CD8-positive, alpha-beta T cell (primary cell): ENCODE measurements at regions of chr13 and their contacts with region 1.

Region 1: GRCh38 chr13:99501184-99501847 is at the start of gene TM9SF2:
- DNase-seq: peak; percentile 92 to 99 (median 97)
- ATAC-seq: peak; percentile 59
- H3K4me3 ChIP-seq: peak within 1 kb of the TSS; percentile 83 to 91
- H3K4me3 Mint-ChIP-seq: peak within 1 kb of the TSS; percentile 99
- H3K27ac ChIP-seq: peak within 1 kb of the TSS; percentile 86 to 88
- H3K27ac Mint-ChIP-seq: peak within 1 kb of the TSS; percentile 98
- H3K4me1 ChIP-seq: peaks cover 66% of the 10 kb centered on the region
- H3K4me1 Mint-ChIP-seq: peaks cover 81% of the 10 kb centered on the region
- H3K27me3 ChIP-seq: no peaks in the 10 kb centered on the region
- H3K27me3 Mint-ChIP-seq: no peaks in the 10 kb centered on the region
- CTCF ChIP-seq: no peak
- total RNA-seq, gene TM9SF2: 42.7 to 47.5 TPM

Region 2: GRCh38 chr13:97975848-97976609 is 1525.3 kb before region 1 on chr13:
- CTCF ChIA-PET with region 1: no interaction called
- POLR2A ChIA-PET with region 1: no interaction called
- intact Hi-C with region 1: loop called (anchors 5 to 10 kb)
- DNase-seq: peak; percentile 77 to 95 (median 88)
- ATAC-seq: peak; percentile 92
- H3K4me3 ChIP-seq: peak overlapping the region; percentile 89 to 92
- H3K4me3 Mint-ChIP-seq: peak overlapping the region; percentile 94
- H3K27ac ChIP-seq: peak overlapping the region; percentile 73 to 82
- H3K27ac Mint-ChIP-seq: peak overlapping the region; percentile 93
- H3K4me1 ChIP-seq: peaks cover 21% of the 10 kb centered on the region
- H3K4me1 Mint-ChIP-seq: peaks cover 42% of the 10 kb centered on the region
- H3K27me3 ChIP-seq: no peaks in the 10 kb centered on the region
- H3K27me3 Mint-ChIP-seq: no peaks in the 10 kb centered on the region
- CTCF ChIP-seq: no peak

Region 3: DNA sequence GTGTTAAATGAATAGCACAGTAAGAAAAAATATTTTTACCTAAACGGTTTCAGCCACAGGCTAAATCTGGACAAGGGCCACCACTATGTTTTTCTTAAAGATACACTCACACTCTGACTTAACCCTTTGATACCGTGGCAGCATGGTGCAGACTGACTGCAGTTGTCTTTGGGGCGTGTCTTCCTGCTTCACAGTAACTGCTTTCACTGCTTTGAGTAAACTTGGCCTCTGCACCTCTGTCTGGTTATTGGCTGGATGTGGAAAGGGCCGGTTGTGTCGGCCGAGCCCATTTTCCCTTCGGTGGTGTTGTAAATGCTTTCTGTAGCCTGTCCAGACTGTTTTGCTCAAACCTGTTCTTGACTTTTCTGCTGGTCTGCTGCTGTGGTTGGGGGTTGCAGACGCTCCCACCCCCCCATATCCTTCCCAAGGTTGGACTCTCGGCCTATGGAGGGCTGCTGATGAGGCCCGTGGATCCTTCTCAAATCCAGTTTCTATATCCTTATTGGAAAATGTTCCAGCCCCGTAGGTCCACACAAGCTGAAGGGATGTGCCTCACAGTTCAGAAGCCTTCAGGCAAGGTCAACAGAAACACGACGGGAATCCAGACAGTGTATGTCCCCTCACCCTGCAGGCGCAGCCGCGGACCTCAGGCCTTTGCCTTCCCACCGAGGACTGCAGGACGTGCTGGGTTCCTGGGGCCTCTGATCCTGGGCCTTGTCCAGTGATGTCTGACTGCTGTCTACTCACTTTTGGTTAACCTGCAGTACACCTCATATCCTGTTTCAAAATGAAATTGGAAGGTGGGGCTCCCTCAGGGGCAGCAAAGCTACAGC is 1234.0 kb before region 1 on chr13:
- CTCF ChIA-PET with region 1: no interaction called
- POLR2A ChIA-PET with region 1: no interaction called
- intact Hi-C with region 1: no loop called
- DNase-seq: no peak
- ATAC-seq: no peak
- H3K4me3 ChIP-seq: no peak overlapping the region
- H3K4me3 Mint-ChIP-seq: no peak overlapping the region
- H3K27ac ChIP-seq: no peak overlapping the region
- H3K27ac Mint-ChIP-seq: no peak overlapping the region
- H3K4me1 ChIP-seq: no peaks in the 10 kb centered on the region
- H3K4me1 Mint-ChIP-seq: no peaks in the 10 kb centered on the region
- H3K27me3 ChIP-seq: no peaks in the 10 kb centered on the region
- H3K27me3 Mint-ChIP-seq: no peaks in the 10 kb centered on the region
- CTCF ChIP-seq: no peak

Region 4: DNA sequence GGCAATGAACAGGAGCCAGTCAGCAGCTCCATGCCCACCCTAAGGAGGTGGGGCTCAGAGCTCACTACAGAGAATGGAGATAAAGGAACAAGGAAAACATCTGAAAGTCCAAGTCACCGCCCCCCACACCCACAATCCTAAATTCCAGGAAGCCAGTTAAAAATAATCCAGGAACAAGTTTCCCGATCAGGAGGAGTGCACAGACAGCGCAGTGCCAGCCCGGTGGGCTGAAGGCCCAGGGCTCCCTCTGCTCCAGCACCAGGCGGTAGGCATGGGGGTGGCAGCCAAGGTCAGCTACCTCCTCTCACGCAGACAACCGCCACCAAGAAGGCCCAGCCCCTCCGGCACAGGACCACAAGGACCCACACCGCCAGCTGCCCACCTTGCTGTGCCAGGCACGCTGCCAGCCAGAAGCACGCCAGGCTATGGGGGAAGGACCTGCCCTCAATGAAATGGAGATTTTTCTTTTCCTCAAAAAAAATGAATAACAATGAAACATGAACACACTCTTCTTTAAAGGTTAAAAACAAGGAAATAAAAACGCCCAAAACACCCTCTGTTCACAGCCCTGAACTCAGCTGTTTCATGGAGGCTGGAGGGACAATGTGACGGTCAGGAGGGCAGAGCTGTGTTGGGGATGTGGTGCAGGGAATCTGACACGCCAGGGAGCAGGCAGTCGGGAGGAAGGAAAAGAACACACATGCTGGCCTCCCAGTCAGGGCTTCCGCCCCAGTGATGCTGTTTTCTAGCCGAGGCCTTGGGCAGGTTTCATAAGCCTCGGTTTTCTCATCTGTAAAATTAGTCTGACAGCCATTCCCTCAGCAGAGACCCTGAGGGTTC is 935.4 kb before region 1 on chr13:
- CTCF ChIA-PET with region 1: no interaction called
- POLR2A ChIA-PET with region 1: no interaction called
- intact Hi-C with region 1: loop called in 1 of 2 experiments (anchors 10 kb)
- DNase-seq: no peak
- ATAC-seq: no peak
- H3K4me3 ChIP-seq: no peak overlapping the region
- H3K4me3 Mint-ChIP-seq: peak overlapping the region; percentile 73
- H3K27ac ChIP-seq: peak overlapping the region in 1 of 2 experiments; percentile 39
- H3K27ac Mint-ChIP-seq: peak overlapping the region; percentile 97
- H3K4me1 ChIP-seq: peaks cover 79% of the 10 kb centered on the region
- H3K4me1 Mint-ChIP-seq: peaks cover 87% of the 10 kb centered on the region
- H3K27me3 ChIP-seq: no peaks in the 10 kb centered on the region
- H3K27me3 Mint-ChIP-seq: no peaks in the 10 kb centered on the region
- CTCF ChIP-seq: no peak

Region 5: GRCh38 chr13:99200432-99201167 is 300.7 kb before region 1 on chr13 and contains the start of gene UBAC2:
- CTCF ChIA-PET with region 1: no interaction called
- POLR2A ChIA-PET with region 1: no interaction called
- intact Hi-C with region 1: loop called (anchors 1 to 5 kb)
- DNase-seq: peak; percentile 93 to 99 (median 97)
- ATAC-seq: peak; percentile 77
- H3K4me3 ChIP-seq: peak within 1 kb of the TSS; percentile 77 to 90
- H3K4me3 Mint-ChIP-seq: peak within 1 kb of the TSS; percentile 90
- H3K27ac ChIP-seq: peak within 1 kb of the TSS; percentile 98 to 99
- H3K27ac Mint-ChIP-seq: peak within 1 kb of the TSS; percentile 94
- H3K4me1 ChIP-seq: peaks cover 53% of the 10 kb centered on the region
- H3K4me1 Mint-ChIP-seq: peaks cover 69% of the 10 kb centered on the region
- H3K27me3 ChIP-seq: no peaks in the 10 kb centered on the region
- H3K27me3 Mint-ChIP-seq: no peaks in the 10 kb centered on the region
- CTCF ChIP-seq: no peak
- total RNA-seq, gene UBAC2: 62.0 to 63.0 TPM

Region 6: GRCh38 chr13:99258210-99258860 is 243.0 kb before region 1 on chr13 and contains the start of gene GPR18:
- CTCF ChIA-PET with region 1: interaction called, 3 read pairs
- POLR2A ChIA-PET with region 1: no interaction called
- intact Hi-C with region 1: loop called in 1 of 2 experiments (anchors 2 kb)
- DNase-seq: peak in 4 of 9 experiments; percentile 41 to 80 (median 53)
- ATAC-seq: peak; percentile 77
- H3K4me3 ChIP-seq: peak within 1 kb of the TSS; percentile 55 to 63
- H3K4me3 Mint-ChIP-seq: peak within 1 kb of the TSS; percentile 91
- H3K27ac ChIP-seq: peak within 1 kb of the TSS; percentile 67 to 82
- H3K27ac Mint-ChIP-seq: peak within 1 kb of the TSS; percentile 94
- H3K4me1 ChIP-seq: peaks cover 63% of the 10 kb centered on the region
- H3K4me1 Mint-ChIP-seq: peaks cover 74% of the 10 kb centered on the region
- H3K27me3 ChIP-seq: no peaks in the 10 kb centered on the region
- H3K27me3 Mint-ChIP-seq: no peaks in the 10 kb centered on the region
- CTCF ChIP-seq: no peak
- total RNA-seq, gene GPR18: 31.9 to 36.2 TPM

Region 7: GRCh38 chr13:99464441-99464949 is 36.8 kb before region 1 on chr13:
- CTCF ChIA-PET with region 1: no interaction called
- POLR2A ChIA-PET with region 1: interaction called, 3 read pairs
- intact Hi-C with region 1: loop called in 1 of 2 experiments (anchors 5 kb)
- DNase-seq: peak in 3 of 9 experiments; percentile 10 to 49 (median 32)
- ATAC-seq: peak; percentile 51
- H3K4me3 ChIP-seq: peak overlapping the region in 1 of 2 experiments; percentile 14
- H3K4me3 Mint-ChIP-seq: peak overlapping the region; percentile 62
- H3K27ac ChIP-seq: peak overlapping the region; percentile 25 to 69
- H3K27ac Mint-ChIP-seq: peak overlapping the region; percentile 97
- H3K4me1 ChIP-seq: peaks cover 16% of the 10 kb centered on the region
- H3K4me1 Mint-ChIP-seq: peaks cover 29% of the 10 kb centered on the region
- H3K27me3 ChIP-seq: no peaks in the 10 kb centered on the region
- H3K27me3 Mint-ChIP-seq: no peaks in the 10 kb centered on the region
- CTCF ChIP-seq: no peak

Region 8: GRCh38 chr13:100588331-100589177 is 1087.2 kb after region 1 on chr13 and contains the start of gene GGACT:
- CTCF ChIA-PET with region 1: no interaction called
- POLR2A ChIA-PET with region 1: no interaction called
- intact Hi-C with region 1: loop called (anchors 5 kb)
- DNase-seq: peak; percentile 68 to 93 (median 85)
- ATAC-seq: peak; percentile 95
- H3K4me3 ChIP-seq: peak within 1 kb of the TSS; percentile 65 to 70
- H3K4me3 Mint-ChIP-seq: peak within 1 kb of the TSS; percentile 84
- H3K27ac ChIP-seq: peak within 1 kb of the TSS; percentile 80 to 82
- H3K27ac Mint-ChIP-seq: peak within 1 kb of the TSS; percentile 89
- H3K4me1 ChIP-seq: peaks cover 39% of the 10 kb centered on the region
- H3K4me1 Mint-ChIP-seq: peaks cover 44% of the 10 kb centered on the region
- H3K27me3 ChIP-seq: no peaks in the 10 kb centered on the region
- H3K27me3 Mint-ChIP-seq: no peaks in the 10 kb centered on the region
- CTCF ChIP-seq: peak; percentile 74
- total RNA-seq, gene GGACT: 0.98 to 1.1 TPM